ENCODE measurements at regions of chr11 and their contacts with region 1.

Region 1: GRCh38 chr11:128831174-128832120 is 35.6 kb downstream of the KCNJ1 start:
- DNase-seq: peak; percentile 69
- ATAC-seq: peak; percentile 92
- H3K4me3 ChIP-seq: peak overlapping the region; percentile 28; the same call in 1 of the 2 replicates
- H3K27ac ChIP-seq: peak overlapping the region; percentile 60
- H3K4me1 ChIP-seq: peaks cover 27% of the 10 kb centered on the region
- H3K27me3 ChIP-seq: no peaks in the 10 kb centered on the region
- CTCF ChIP-seq: peak; percentile 80 to 91 (median 85); a peak in 5 of 6 replicates
- EP300 ChIP-seq: no peak
- POLR2A ChIP-seq: no peak
- RAD21 ChIP-seq: peak; percentile 93

Region 2: GRCh38 chr11:128157423-128158298 is 673.8 kb before region 1 on chr11:
- CTCF ChIA-PET with region 1: interaction called, 58 read pairs
- POLR2A ChIA-PET with region 1: no interaction called
- RAD21 ChIA-PET with region 1: interaction called, 12 read pairs
- SMC1A ChIA-PET with region 1: interaction called, 22 read pairs
- in situ Hi-C with region 1: no loop called
- intact Hi-C with region 1: loop called (anchors 5 kb)
- DNase-seq: peak; percentile 51
- ATAC-seq: peak; percentile 94
- H3K4me3 ChIP-seq: no peak overlapping the region
- H3K27ac ChIP-seq: no peak overlapping the region
- H3K4me1 ChIP-seq: no peaks in the 10 kb centered on the region
- H3K27me3 ChIP-seq: peaks cover 2 to 3% of the 10 kb centered on the region in 2 experiments; a peak in 2 of 4 replicates
- CTCF ChIP-seq: peak; percentile 58 to 92 (median 73)
- EP300 ChIP-seq: no peak
- POLR2A ChIP-seq: no peak
- RAD21 ChIP-seq: peak; percentile 61

Region 3: DNA sequence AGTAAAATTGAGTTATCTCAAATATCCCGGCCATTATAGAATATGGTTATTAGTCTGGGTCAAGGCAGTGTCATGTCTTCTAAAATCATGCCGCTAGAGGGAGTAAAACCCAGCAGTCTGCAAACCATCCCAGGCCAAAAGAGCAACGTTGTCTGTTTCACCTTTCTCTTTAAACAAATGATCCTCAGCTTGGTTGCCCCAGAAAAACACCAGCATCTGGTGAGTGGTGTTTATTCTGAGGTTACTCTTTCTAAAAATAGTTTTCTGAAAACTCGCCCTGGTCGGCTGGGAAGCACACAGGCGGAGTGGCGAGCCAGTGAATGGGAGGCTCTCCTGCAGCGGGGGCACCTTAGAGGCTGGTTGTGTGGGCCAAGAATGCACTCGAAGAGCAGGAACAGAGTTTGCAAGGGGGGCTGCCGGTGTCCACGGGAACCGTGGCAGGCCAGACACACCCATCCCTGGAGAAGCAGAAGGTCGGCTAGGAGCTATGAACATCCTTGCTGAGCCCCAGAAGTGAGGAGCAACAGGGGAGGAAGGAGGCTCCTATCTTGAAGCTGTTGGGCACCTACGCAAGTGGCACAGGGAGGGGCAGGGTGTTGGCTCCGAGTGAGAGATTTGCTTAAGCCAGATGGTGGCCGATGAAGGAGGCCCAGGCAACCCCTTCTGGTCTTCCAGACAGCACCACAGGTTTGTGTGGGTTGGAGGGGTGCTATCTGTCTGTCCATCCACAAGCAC is 541.2 kb before region 1 on chr11:
- CTCF ChIA-PET with region 1: interaction called, 34 read pairs
- POLR2A ChIA-PET with region 1: interaction called, 3 read pairs
- RAD21 ChIA-PET with region 1: interaction called, 32 read pairs
- SMC1A ChIA-PET with region 1: interaction called, 21 read pairs
- in situ Hi-C with region 1: loop called (anchors 5 kb)
- intact Hi-C with region 1: loop called (anchors 1 kb)
- DNase-seq: peak; percentile 80
- ATAC-seq: peak; percentile 92
- H3K4me3 ChIP-seq: peak overlapping the region; percentile 53
- H3K27ac ChIP-seq: peak overlapping the region; percentile 75
- H3K4me1 ChIP-seq: peaks cover 25% of the 10 kb centered on the region
- H3K27me3 ChIP-seq: no peaks in the 10 kb centered on the region
- CTCF ChIP-seq: peak; percentile 71 to 89 (median 85)
- EP300 ChIP-seq: peak; percentile 10 to 24; a peak in 1 of 4 replicates
- POLR2A ChIP-seq: peak; percentile 43
- RAD21 ChIP-seq: peak; percentile 99

Region 4: GRCh38 chr11:128603752-128604414 is 227.6 kb before region 1 on chr11:
- CTCF ChIA-PET with region 1: interaction called, 38 read pairs
- POLR2A ChIA-PET with region 1: no interaction called
- RAD21 ChIA-PET with region 1: interaction called, 11 read pairs
- SMC1A ChIA-PET with region 1: interaction called, 47 read pairs
- in situ Hi-C with region 1: no loop called
- intact Hi-C with region 1: loop called (anchors 1 kb)
- DNase-seq: peak; percentile 44
- ATAC-seq: peak; percentile 91
- H3K4me3 ChIP-seq: no peak overlapping the region
- H3K27ac ChIP-seq: no peak overlapping the region
- H3K4me1 ChIP-seq: peaks cover 6% of the 10 kb centered on the region
- H3K27me3 ChIP-seq: no peaks in the 10 kb centered on the region
- CTCF ChIP-seq: peak; percentile 5 to 68 (median 38); a peak in 5 of 6 replicates
- EP300 ChIP-seq: no peak
- POLR2A ChIP-seq: no peak
- RAD21 ChIP-seq: peak; percentile 87

Region 5: DNA sequence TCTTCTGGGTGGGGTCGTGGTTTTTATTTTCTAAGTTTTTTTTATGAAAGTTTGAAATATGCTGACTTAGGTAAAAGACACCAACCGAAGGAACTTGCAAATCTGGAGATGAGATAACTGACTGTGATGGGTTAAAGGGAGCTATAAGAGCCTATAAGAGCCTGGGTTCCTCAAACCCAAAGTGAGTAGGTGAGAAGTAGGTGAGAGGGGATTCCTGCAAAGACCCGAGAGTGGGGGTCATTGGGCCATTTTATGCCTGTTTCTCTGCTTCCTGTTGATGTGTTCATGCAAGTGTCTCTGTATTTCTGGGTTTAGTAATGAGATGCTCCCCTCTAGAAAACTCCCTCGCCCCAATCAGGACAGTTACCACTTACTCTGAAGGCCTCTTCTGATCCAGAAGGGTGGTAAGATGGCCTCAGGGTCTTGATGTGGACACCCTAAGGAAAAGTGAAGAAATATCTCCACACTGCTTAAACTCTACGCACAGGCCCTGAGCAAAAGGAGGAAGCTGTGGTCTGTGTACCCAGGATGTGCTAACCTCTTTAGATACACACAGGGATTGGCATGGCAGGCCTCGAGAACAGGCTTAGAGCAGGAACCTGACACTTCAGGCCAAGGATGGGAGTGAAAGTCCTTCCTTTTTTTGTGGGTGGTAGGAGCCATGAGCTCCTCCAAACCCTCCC is 135.8 kb before region 1 on chr11:
- CTCF ChIA-PET with region 1: interaction called, 3 read pairs
- POLR2A ChIA-PET with region 1: interaction called, 4 read pairs
- RAD21 ChIA-PET with region 1: interaction called, 5 read pairs
- SMC1A ChIA-PET with region 1: interaction called, 4 read pairs
- in situ Hi-C with region 1: no loop called
- intact Hi-C with region 1: loop called (anchors 5 kb)
- DNase-seq: no peak
- ATAC-seq: peak; percentile 40
- H3K4me3 ChIP-seq: peak overlapping the region; percentile 95
- H3K27ac ChIP-seq: peak overlapping the region; percentile 81
- H3K4me1 ChIP-seq: peaks cover 28% of the 10 kb centered on the region
- H3K27me3 ChIP-seq: no peaks in the 10 kb centered on the region
- CTCF ChIP-seq: no peak
- EP300 ChIP-seq: no peak
- POLR2A ChIP-seq: no peak
- RAD21 ChIP-seq: no peak

Region 6: GRCh38 chr11:128757235-128757711 is 74.2 kb before region 1 on chr11:
- CTCF ChIA-PET with region 1: interaction called, 89 read pairs
- POLR2A ChIA-PET with region 1: no interaction called
- RAD21 ChIA-PET with region 1: interaction called, 55 read pairs
- SMC1A ChIA-PET with region 1: interaction called, 55 read pairs
- in situ Hi-C with region 1: no loop called
- intact Hi-C with region 1: loop called (anchors 2 kb)
- DNase-seq: peak; percentile 93
- ATAC-seq: peak; percentile 89
- H3K4me3 ChIP-seq: no peak overlapping the region
- H3K27ac ChIP-seq: peak overlapping the region; percentile 87
- H3K4me1 ChIP-seq: peaks cover 31% of the 10 kb centered on the region
- H3K27me3 ChIP-seq: no peaks in the 10 kb centered on the region
- CTCF ChIP-seq: peak; percentile 81 to 94 (median 92)
- EP300 ChIP-seq: 0 out of 4 replicates have a peak, but pooled peaks of 1 of the 2 experiments have one; percentile 56
- POLR2A ChIP-seq: no peak
- RAD21 ChIP-seq: peak; percentile 90

Region 7: DNA sequence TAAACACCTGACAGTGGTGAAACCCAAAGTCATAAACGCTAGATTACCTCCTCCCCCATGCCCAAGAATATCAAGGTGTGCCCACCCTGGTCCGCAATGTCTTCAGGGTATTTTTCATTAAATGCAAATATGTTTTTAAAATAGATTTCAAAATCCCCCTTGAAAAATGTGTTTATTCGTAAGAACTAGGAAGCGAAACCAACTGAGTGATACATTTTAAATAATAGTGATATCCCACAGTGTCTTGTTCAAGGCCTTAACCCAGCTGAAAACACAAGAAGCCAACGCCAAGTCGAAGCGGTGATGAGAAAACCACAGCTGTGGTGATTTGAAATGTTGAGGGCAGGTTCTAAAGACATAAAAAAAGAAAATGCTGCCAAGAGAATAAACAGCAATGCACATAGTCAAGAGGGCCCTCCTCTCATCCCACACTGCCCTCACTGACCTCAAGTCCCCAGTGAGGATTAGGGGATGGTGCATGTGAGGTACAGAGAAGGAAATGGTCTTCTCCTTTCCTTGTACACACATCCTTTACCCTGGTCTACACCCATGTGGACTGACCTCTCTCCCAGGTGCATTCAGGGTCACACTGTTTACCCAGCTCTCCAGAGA is 10.1 kb after region 1 on chr11:
- CTCF ChIA-PET with region 1: interaction called, 123 read pairs
- POLR2A ChIA-PET with region 1: interaction called, 4 read pairs
- RAD21 ChIA-PET with region 1: interaction called, 20 read pairs
- SMC1A ChIA-PET with region 1: interaction called, 89 read pairs
- in situ Hi-C with region 1: no loop called
- intact Hi-C with region 1: no loop called
- DNase-seq: peak; percentile 64
- ATAC-seq: peak; percentile 88
- H3K4me3 ChIP-seq: no peak overlapping the region
- H3K27ac ChIP-seq: peak overlapping the region; percentile 57
- H3K4me1 ChIP-seq: peaks cover 29% of the 10 kb centered on the region
- H3K27me3 ChIP-seq: no peaks in the 10 kb centered on the region
- CTCF ChIP-seq: no peak
- EP300 ChIP-seq: no peak; a peak in 1 of 4 replicates
- POLR2A ChIP-seq: no peak
- RAD21 ChIP-seq: no peak